ENCODE measurements at regions of chr7 and their contacts with region 1.

Region 1: GRCh38 chr7:117715784-117716445 is 157.3 kb downstream of the CTTNBP2 start:
- DNase-seq: peak; percentile 57 to 75
- H3K4me3 ChIP-seq: no peak overlapping the region
- H3K4me3 Mint-ChIP-seq: no peak overlapping the region
- H3K27ac Mint-ChIP-seq: no peak overlapping the region
- H3K4me1 ChIP-seq: peaks cover 14% of the 10 kb centered on the region
- H3K4me1 Mint-ChIP-seq: peaks cover 31% of the 10 kb centered on the region
- H3K27me3 ChIP-seq: no peaks in the 10 kb centered on the region
- H3K27me3 Mint-ChIP-seq: no peaks in the 10 kb centered on the region
- CTCF ChIP-seq: peak; percentile 69 to 71

Region 2: GRCh38 chr7:117399820-117400422 is 316.0 kb before region 1 on chr7:
- CTCF ChIA-PET with region 1: interaction called, 3 read pairs
- POLR2A ChIA-PET with region 1: no interaction called
- intact Hi-C with region 1: loop called (anchors 1 kb)
- DNase-seq: no peak
- H3K4me3 ChIP-seq: no peak overlapping the region
- H3K4me3 Mint-ChIP-seq: no peak overlapping the region
- H3K27ac Mint-ChIP-seq: no peak overlapping the region
- H3K4me1 ChIP-seq: peaks cover 11% of the 10 kb centered on the region
- H3K4me1 Mint-ChIP-seq: peaks cover 7% of the 10 kb centered on the region
- H3K27me3 ChIP-seq: no peaks in the 10 kb centered on the region
- H3K27me3 Mint-ChIP-seq: no peaks in the 10 kb centered on the region
- CTCF ChIP-seq: peak; percentile 28 to 48

Region 3: GRCh38 chr7:117479225-117480054 is 236.5 kb before region 1 on chr7 and contains the start of gene CFTR:
- CTCF ChIA-PET with region 1: interaction called, 3 read pairs
- POLR2A ChIA-PET with region 1: interaction called, 3 read pairs
- intact Hi-C with region 1: loop called (anchors 5 kb)
- DNase-seq: peak; percentile 72 to 79
- H3K4me3 ChIP-seq: peak within 1 kb of the TSS; percentile 82
- H3K4me3 Mint-ChIP-seq: peak within 1 kb of the TSS; percentile 93
- H3K27ac Mint-ChIP-seq: peak within 1 kb of the TSS; percentile 87
- H3K4me1 ChIP-seq: peaks cover 25% of the 10 kb centered on the region; the same call in 1 of the 2 replicates
- H3K4me1 Mint-ChIP-seq: peaks cover 28% of the 10 kb centered on the region
- H3K27me3 ChIP-seq: no peaks in the 10 kb centered on the region
- H3K27me3 Mint-ChIP-seq: no peaks in the 10 kb centered on the region
- CTCF ChIP-seq: no peak
- total RNA-seq, gene CFTR: 130 and 132 TPM in 2 replicates

Region 4: GRCh38 chr7:117619578-117620094 is 96.3 kb before region 1 on chr7:
- CTCF ChIA-PET with region 1: no interaction called
- POLR2A ChIA-PET with region 1: no interaction called
- intact Hi-C with region 1: loop called (anchors 5 kb)
- DNase-seq: no peak
- H3K4me3 ChIP-seq: no peak overlapping the region
- H3K4me3 Mint-ChIP-seq: no peak overlapping the region
- H3K27ac Mint-ChIP-seq: peak overlapping the region; percentile 37
- H3K4me1 ChIP-seq: peaks cover 18% of the 10 kb centered on the region
- H3K4me1 Mint-ChIP-seq: peaks cover 31% of the 10 kb centered on the region
- H3K27me3 ChIP-seq: no peaks in the 10 kb centered on the region
- H3K27me3 Mint-ChIP-seq: no peaks in the 10 kb centered on the region
- CTCF ChIP-seq: no peak

Region 5: GRCh38 chr7:117648203-117648866 is 67.6 kb before region 1 on chr7:
- CTCF ChIA-PET with region 1: no interaction called
- POLR2A ChIA-PET with region 1: no interaction called
- intact Hi-C with region 1: no loop called
- DNase-seq: no peak
- H3K4me3 ChIP-seq: no peak overlapping the region
- H3K4me3 Mint-ChIP-seq: no peak overlapping the region
- H3K27ac Mint-ChIP-seq: no peak overlapping the region
- H3K4me1 ChIP-seq: peaks cover 33% of the 10 kb centered on the region
- H3K4me1 Mint-ChIP-seq: peaks cover 36% of the 10 kb centered on the region
- H3K27me3 ChIP-seq: no peaks in the 10 kb centered on the region
- H3K27me3 Mint-ChIP-seq: no peaks in the 10 kb centered on the region
- CTCF ChIP-seq: no peak

Region 6: GRCh38 chr7:117673839-117674238 is 42.1 kb before region 1 on chr7:
- CTCF ChIA-PET with region 1: interaction called, 11 read pairs
- POLR2A ChIA-PET with region 1: no interaction called
- intact Hi-C with region 1: loop called (anchors 1 kb)
- DNase-seq: peak in 1 of 2 experiments; percentile 39
- H3K4me3 ChIP-seq: no peak overlapping the region
- H3K4me3 Mint-ChIP-seq: peak overlapping the region; percentile 65
- H3K27ac Mint-ChIP-seq: peak overlapping the region; percentile 87
- H3K4me1 ChIP-seq: peaks cover 60% of the 10 kb centered on the region
- H3K4me1 Mint-ChIP-seq: peaks cover 59% of the 10 kb centered on the region
- H3K27me3 ChIP-seq: no peaks in the 10 kb centered on the region
- H3K27me3 Mint-ChIP-seq: no peaks in the 10 kb centered on the region
- CTCF ChIP-seq: peak; percentile 22 to 46

Region 7: GRCh38 chr7:117837841-117838240 is 121.9 kb after region 1 on chr7:
- CTCF ChIA-PET with region 1: no interaction called
- POLR2A ChIA-PET with region 1: no interaction called
- intact Hi-C with region 1: no loop called
- DNase-seq: peak; percentile 44 to 59
- H3K4me3 ChIP-seq: no peak overlapping the region
- H3K4me3 Mint-ChIP-seq: no peak overlapping the region
- H3K27ac Mint-ChIP-seq: no peak overlapping the region
- H3K4me1 ChIP-seq: peaks cover 16% of the 10 kb centered on the region
- H3K4me1 Mint-ChIP-seq: peaks cover 16% of the 10 kb centered on the region
- H3K27me3 ChIP-seq: no peaks in the 10 kb centered on the region
- H3K27me3 Mint-ChIP-seq: peaks cover 4% of the 10 kb centered on the region
- CTCF ChIP-seq: no peak